AG04450 (cell line): ENCODE measurements at regions of chr4 and their contacts with region 1.

Region 1: GRCh38 chr4:186770481-186771175 is 47.0 kb upstream of the FAT1 start:
- DNase-seq: peak; percentile 32
- H3K4me3 ChIP-seq: no peak overlapping the region
- H3K27ac ChIP-seq: peak overlapping the region; percentile 31
- H3K27me3 ChIP-seq: no peaks in the 10 kb centered on the region
- CTCF ChIP-seq: no peak

Region 2: DNA sequence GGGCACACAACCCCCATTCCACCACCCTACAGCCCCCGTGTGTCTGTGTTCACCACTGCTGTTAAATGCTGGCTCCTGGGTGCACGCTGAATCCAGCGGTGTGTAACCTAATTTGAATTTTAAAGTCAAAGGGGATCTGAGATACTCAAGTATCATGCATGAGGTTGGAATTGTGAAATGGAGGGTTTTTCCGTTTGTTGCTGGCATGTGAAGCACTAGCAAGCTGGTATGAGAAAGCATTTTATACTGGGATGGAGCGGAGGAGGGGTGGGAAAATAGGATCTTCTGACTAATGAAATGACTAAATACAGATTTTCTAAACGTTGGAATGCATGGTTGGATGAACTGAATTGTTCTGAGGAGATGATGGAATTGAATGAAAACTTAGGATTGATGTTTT is 10.1 kb before region 1 on chr4:
- CTCF ChIA-PET with region 1: no interaction called
- POLR2A ChIA-PET with region 1: no interaction called
- DNase-seq: no peak
- H3K4me3 ChIP-seq: no peak overlapping the region
- H3K27ac ChIP-seq: peak overlapping the region; percentile 39
- H3K27me3 ChIP-seq: no peaks in the 10 kb centered on the region
- CTCF ChIP-seq: no peak

Region 3: GRCh38 chr4:186789651-186790050 is 19.0 kb after region 1 on chr4:
- CTCF ChIA-PET with region 1: no interaction called
- POLR2A ChIA-PET with region 1: no interaction called
- DNase-seq: peak; percentile 66
- H3K4me3 ChIP-seq: no peak overlapping the region
- H3K27ac ChIP-seq: no peak overlapping the region
- H3K27me3 ChIP-seq: no peaks in the 10 kb centered on the region
- CTCF ChIP-seq: no peak

Region 4: DNA sequence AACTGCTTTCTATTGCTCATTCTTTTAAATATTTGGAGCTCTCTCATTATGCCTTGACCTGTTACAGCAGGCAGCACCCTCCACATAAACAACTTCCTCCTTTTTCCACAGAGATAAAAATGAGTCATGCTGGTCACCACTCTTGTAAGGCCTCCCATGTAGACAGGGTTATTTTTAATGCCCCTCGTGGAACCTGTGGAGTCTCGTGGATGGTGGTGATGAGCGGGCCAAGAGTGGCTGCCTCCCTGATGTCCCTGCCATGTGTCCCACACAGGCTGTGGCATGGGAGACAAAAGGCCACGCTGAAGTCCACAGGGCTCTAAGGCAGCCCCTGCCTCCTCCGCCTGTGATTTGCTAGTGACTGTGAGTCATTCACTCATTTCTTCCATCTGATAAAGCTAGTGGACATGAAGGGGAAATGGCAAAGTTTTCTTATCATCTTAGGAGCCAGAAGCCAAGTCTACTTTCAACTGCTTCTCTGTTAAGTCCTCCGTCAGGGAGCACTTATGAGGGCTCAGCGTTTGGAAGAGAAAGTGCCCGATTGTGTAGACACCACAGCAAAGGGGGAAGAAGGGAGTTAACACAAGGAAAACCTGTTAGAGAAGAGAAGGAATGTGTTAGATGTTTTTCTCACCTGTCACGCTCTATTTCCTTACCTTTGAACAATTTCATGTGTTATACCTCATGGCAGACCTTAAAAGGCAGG is 74.7 kb after region 1 on chr4:
- CTCF ChIA-PET with region 1: no interaction called
- POLR2A ChIA-PET with region 1: interaction called, 10 read pairs
- DNase-seq: peak; percentile 82
- H3K4me3 ChIP-seq: no peak overlapping the region
- H3K27ac ChIP-seq: peak overlapping the region; percentile 92
- H3K27me3 ChIP-seq: no peaks in the 10 kb centered on the region
- CTCF ChIP-seq: no peak